HCT116 (cell line): ENCODE measurements at regions of chr20 and their contacts with region 1.

Region 1: GRCh38 chr20:6178537-6178936 is 55.7 kb upstream of the FERMT1 start:
- DNase-seq: peak; percentile 22
- ATAC-seq: peak; percentile 63; the same call in 1 of the 2 replicates
- H3K4me3 ChIP-seq: no peak overlapping the region
- H3K27ac ChIP-seq: no peak overlapping the region
- H3K4me1 ChIP-seq: no peaks in the 10 kb centered on the region
- H3K27me3 ChIP-seq: no peaks in the 10 kb centered on the region
- CTCF ChIP-seq: peak; percentile 28 to 60 (median 43); a peak in 4 of 6 replicates
- POLR2A ChIP-seq: no peak
- RAD21 ChIP-seq: peak; percentile 61

Region 2: DNA sequence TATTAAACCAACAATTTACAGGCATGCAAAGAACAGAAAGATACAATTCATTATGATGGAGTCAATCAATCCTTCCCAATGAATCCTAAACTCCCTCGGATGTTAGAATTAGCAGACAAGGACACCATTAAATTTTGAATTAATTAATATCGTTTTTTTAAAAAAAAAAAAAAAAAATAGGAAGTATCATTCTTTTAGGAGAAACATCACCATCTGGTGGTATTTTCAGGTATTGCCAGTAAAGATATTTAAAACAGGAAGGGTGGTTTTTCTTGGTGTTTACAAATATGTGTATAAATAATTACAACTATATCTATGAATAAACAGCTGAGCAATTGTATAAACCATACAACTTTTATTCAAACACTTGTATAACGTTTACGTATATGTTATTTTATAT is 1197.4 kb after region 1 on chr20:
- CTCF ChIA-PET with region 1: no interaction called
- POLR2A ChIA-PET with region 1: no interaction called
- RAD21 ChIA-PET with region 1: no interaction called
- intact Hi-C with region 1: loop called (anchors 10 kb)
- DNase-seq: peak; percentile 2
- ATAC-seq: no peak
- H3K4me3 ChIP-seq: no peak overlapping the region
- H3K27ac ChIP-seq: no peak overlapping the region
- H3K4me1 ChIP-seq: no peaks in the 10 kb centered on the region
- H3K27me3 ChIP-seq: no peaks in the 10 kb centered on the region
- CTCF ChIP-seq: peak in 2 of 3 experiments; percentile 11 to 29; a peak in 2 of 6 replicates
- POLR2A ChIP-seq: no peak
- RAD21 ChIP-seq: peak; percentile 15; the same call in 1 of the 2 replicates

Region 3: DNA sequence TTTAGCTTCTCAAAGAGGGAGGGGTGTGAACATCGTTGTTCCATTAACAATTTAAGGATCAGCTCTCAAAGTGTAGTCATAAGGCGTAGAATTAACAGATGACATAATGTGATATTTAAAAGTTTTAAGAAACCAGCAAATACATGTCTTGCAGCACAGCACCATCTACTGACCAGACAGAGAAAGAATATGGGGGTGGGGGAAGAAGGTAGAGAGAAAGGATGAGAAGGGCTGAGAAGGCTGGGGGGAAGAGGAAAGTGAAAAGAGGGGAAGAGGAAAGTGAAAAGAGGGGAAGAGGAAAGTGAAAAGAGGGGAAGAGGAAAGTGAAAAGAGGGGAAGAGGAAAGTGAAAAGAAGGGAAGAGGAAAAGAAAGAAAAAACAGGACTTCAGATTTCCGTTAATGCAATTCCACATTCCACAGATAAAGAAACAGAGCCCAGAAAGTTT is 1680.8 kb after region 1 on chr20:
- CTCF ChIA-PET with region 1: no interaction called
- POLR2A ChIA-PET with region 1: no interaction called
- RAD21 ChIA-PET with region 1: no interaction called
- intact Hi-C with region 1: loop called (anchors 1 kb)
- DNase-seq: no peak
- ATAC-seq: peak; percentile 47; the same call in 1 of the 2 replicates
- H3K4me3 ChIP-seq: no peak overlapping the region
- H3K27ac ChIP-seq: no peak overlapping the region
- H3K4me1 ChIP-seq: peaks cover 0 to 15% of the 10 kb centered on the region in 2 experiments; a peak in 2 of 4 replicates
- H3K27me3 ChIP-seq: no peaks in the 10 kb centered on the region
- CTCF ChIP-seq: peak; percentile 32 to 69 (median 52); a peak in 5 of 6 replicates
- POLR2A ChIP-seq: no peak
- RAD21 ChIP-seq: peak; percentile 66